ENCODE measurements at regions of chr10 and their contacts with region 1.

Region 1: DNA sequence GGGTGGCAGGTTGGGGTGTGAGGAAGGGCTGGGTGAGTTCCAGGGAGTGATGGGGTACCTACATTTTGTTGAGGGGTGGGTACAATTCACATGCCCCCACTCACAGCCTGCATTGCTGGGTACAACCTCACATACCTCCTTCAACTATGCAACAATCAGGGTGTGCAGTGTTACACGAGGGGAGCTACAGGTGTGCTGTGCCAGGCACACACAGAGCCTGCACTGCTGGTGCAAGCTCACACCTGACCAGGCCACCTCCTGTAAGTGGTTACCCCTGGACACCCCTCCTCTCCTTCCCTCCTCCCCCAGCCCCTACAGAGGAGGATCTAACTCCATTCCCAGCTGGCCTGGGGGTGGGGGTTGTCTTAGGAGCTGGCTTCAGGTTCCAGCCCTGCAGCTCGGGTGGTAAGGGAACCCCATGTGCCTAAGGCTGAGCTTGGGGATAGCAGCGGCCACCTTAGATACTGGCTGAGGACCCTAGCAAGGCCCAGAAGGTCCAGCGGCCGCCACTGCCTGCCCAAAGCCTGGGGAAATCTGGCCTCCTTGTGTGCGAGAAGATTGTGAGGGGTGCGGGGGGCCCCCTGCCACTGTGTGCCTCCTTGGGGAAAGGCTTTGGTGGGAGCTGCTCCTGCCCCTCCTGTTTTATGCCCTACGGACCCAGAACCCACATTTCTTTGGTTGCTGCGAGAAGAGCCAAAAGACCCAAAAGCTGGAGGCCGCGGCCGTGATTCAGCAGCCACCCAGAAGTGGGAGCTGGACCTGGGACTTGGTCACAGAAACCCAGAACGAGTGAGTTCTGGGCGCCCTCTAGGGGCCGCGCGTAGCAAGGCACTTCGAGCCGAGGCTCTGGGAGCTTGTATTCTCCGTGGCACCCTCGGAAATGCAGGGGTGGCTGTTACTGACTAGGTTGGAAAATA is 10.8 kb downstream of the TLX1 start:
- DNase-seq: peak; percentile 56
- H3K4me3 ChIP-seq: no peak overlapping the region
- H3K27ac ChIP-seq: no peak overlapping the region
- H3K27me3 ChIP-seq: peaks cover 93% of the 10 kb centered on the region
- CTCF ChIP-seq: peak; percentile 97

Region 2: GRCh38 chr10:100790761-100791208 is 351.1 kb before region 1 on chr10:
- CTCF ChIA-PET with region 1: no interaction called
- POLR2A ChIA-PET with region 1: no interaction called
- DNase-seq: no peak
- H3K4me3 ChIP-seq: no peak overlapping the region
- H3K27ac ChIP-seq: no peak overlapping the region
- H3K27me3 ChIP-seq: peaks cover 37% of the 10 kb centered on the region
- CTCF ChIP-seq: no peak

Region 3: DNA sequence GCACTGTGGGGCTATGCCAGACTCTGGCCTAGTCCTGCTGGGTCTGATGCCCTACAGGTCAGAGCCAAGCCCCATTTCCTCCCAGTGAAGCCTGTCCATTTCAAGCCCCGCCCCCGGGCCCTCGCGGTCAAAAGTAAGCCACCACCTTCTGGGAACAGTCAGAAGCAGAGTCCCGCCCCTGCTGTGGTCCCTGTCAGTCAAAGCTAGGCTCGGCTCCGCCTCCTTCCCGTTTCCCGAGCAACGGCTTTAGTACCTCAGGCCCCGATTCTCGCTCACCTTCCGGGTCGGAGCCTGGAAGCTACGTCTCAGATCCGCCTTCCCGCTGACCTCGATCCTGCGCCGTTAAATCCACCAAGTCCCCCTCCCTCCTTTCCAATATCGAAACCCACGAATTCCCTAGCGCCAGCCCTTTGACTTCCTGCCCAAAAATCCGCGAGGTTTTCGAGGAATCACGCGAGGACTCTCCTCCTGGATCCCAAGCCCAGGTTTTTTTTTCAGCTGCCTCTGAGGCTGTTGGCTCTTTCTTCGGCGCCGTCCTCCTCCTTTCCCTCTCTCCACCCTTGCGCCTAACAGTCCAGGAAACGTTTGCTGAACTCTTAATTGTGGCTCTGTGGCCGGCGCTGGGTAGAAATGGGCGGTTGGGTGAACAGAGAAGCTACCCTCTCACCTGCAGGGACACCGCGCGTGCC is 99.1 kb before region 1 on chr10:
- CTCF ChIA-PET with region 1: interaction called, 35 read pairs
- POLR2A ChIA-PET with region 1: interaction called, 19 read pairs
- DNase-seq: peak; percentile 89
- H3K4me3 ChIP-seq: peak overlapping the region; percentile 58
- H3K27ac ChIP-seq: peak overlapping the region; percentile 84
- H3K27me3 ChIP-seq: no peaks in the 10 kb centered on the region
- CTCF ChIP-seq: no peak

Region 4: GRCh38 chr10:101060036-101060950 is 81.6 kb before region 1 on chr10:
- CTCF ChIA-PET with region 1: interaction called, 61 read pairs
- POLR2A ChIA-PET with region 1: interaction called, 9 read pairs
- DNase-seq: peak; percentile 85
- H3K4me3 ChIP-seq: peak overlapping the region; percentile 100
- H3K27ac ChIP-seq: peak overlapping the region; percentile 98
- H3K27me3 ChIP-seq: no peaks in the 10 kb centered on the region
- CTCF ChIP-seq: peak; percentile 88

Region 5: GRCh38 chr10:101107771-101108170 is 34.1 kb before region 1 on chr10:
- CTCF ChIA-PET with region 1: interaction called, 304 read pairs
- POLR2A ChIA-PET with region 1: no interaction called
- DNase-seq: no peak
- H3K4me3 ChIP-seq: no peak overlapping the region
- H3K27ac ChIP-seq: no peak overlapping the region
- H3K27me3 ChIP-seq: peaks cover 48% of the 10 kb centered on the region
- CTCF ChIP-seq: no peak

Region 6: DNA sequence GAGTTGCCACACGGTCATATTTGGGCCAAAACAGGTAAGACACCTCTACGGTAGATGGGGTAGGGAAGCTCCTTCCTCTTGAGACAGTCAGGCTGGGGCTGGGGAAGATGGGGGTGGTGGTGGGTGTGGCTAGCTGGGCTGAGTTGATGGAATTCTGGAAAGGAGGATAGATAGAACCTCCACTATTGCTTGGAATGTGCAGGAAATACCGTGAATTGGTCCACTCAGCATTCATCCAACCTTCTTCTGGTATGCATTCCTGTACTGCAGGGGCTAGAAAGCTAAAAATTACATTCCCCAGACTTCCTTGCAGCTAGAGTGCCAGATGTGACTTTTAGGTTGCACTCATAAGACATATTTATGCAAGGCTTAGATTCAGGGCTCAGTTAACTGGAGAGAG is 14.0 kb after region 1 on chr10:
- CTCF ChIA-PET with region 1: interaction called, 27 read pairs
- POLR2A ChIA-PET with region 1: no interaction called
- DNase-seq: no peak
- H3K4me3 ChIP-seq: no peak overlapping the region
- H3K27ac ChIP-seq: no peak overlapping the region
- H3K27me3 ChIP-seq: peaks cover 55% of the 10 kb centered on the region
- CTCF ChIP-seq: no peak

Region 7: DNA sequence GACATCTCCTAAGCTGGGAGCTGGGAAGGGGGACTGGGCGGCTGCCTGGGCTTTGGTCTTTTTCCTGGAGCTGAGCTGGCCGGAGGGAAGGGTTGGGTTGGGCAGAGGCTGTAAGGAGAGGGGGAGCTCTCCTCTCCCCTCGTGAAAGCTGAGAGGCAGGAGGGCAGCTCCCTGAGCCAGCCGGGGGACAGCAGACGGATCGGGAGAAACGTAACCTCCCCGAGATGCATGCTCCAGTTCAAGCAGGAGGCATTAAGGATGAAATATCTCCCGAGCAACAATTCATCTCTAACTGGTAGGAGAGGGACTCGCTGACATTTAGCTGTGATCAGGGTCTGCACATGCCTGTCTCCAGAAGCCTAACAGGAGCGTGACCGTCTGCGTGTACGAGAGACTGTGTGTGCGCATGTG is 107.3 kb after region 1 on chr10:
- CTCF ChIA-PET with region 1: no interaction called
- POLR2A ChIA-PET with region 1: no interaction called
- DNase-seq: no peak
- H3K4me3 ChIP-seq: no peak overlapping the region
- H3K27ac ChIP-seq: no peak overlapping the region
- H3K27me3 ChIP-seq: peaks cover 43% of the 10 kb centered on the region
- CTCF ChIP-seq: no peak